A549 (cell line): ENCODE measurements at regions of chr12 and their contacts with region 1.

Region 1: DNA sequence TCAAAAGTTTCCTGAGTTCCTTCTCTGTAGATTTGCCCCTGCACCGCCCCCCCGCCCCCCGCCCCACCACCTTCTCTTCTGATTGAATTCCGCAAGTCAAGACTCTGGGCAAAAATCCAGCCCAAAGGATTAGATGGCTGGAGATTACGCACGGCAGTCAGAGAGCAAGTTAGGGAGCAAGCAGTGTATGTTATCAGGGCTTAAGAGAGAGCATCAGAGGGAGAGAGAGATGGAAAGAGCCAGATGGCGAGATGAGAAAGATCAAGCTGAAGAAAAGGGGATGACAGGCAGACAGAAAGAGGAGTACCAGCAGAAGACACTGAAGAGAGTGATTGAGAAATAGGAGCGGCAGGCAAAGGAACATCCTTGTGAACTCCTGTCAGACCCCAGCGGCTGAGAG is 13.9 kb upstream of the ANKRD33 start:
- DNase-seq: no peak
- ATAC-seq: no peak
- H3K4me3 ChIP-seq: no peak overlapping the region
- H3K27ac ChIP-seq: no peak overlapping the region
- H3K4me1 ChIP-seq: no peaks in the 10 kb centered on the region
- CTCF ChIP-seq: no peak
- EP300 ChIP-seq: no peak
- POLR2A ChIP-seq: no peak
- RAD21 ChIP-seq: no peak

Region 2: GRCh38 chr12:51832354-51833107 is 41.5 kb before region 1 on chr12:
- CTCF ChIA-PET with region 1: interaction called, 16 read pairs
- POLR2A ChIA-PET with region 1: no interaction called
- DNase-seq: no peak
- ATAC-seq: no peak; a peak in 1 of 6 replicates
- H3K4me3 ChIP-seq: no peak overlapping the region
- H3K27ac ChIP-seq: no peak overlapping the region
- H3K4me1 ChIP-seq: peaks cover 6% of the 10 kb centered on the region; the same call in 2 of the 3 replicates
- CTCF ChIP-seq: no peak
- EP300 ChIP-seq: no peak
- POLR2A ChIP-seq: no peak
- RAD21 ChIP-seq: no peak

Region 3: DNA sequence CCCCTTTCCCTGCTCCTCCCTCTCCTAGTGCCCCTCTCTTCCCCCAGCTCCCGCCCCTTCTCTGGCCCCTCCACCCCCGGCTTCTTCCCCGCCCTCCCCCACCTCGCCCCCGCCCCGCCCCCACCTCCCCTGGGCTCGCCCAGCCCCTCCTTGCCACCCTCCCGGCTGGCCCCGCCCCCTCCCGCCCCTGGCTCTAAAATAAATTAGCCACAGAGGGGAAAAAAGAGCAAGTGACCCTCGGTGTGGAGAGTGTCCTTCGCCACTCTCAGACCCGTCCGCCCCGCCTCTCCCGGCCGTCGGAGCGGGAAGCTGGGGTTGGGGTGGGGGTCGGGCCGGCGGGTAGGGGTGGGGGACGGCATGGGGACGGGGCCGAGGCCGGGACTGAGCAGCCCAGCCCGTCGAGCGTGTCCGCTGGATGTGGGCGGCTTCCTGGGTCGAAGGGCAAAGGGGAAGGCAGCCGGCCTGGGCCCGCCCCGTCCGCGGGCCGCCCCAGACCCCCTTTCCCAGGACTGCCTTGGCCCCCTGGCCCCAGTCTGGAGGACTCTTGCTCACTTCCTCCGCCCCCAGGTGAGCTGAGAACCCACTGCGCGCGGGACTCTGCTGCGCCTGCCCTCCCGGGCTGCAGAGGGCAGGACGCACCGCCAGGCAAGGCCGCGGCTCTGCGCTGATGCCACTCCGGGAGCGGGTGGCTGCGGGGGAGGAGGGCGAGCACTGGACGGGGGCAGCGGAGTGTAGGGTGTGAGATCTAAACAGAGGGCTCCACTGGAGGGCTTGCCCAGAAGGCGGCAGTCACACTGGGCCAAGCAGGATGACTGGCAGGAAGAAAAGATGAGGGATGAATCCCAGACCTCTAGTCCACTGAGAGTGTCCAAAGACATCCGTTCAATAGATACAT is 24.9 kb before region 1 on chr12:
- CTCF ChIA-PET with region 1: interaction called, 14 read pairs
- POLR2A ChIA-PET with region 1: no interaction called
- DNase-seq: no peak
- ATAC-seq: no peak
- H3K4me3 ChIP-seq: peak overlapping the region; percentile 76; the same call in 2 of the 3 replicates
- H3K27ac ChIP-seq: peak overlapping the region in 1 of 2 experiments; percentile 74; a peak in 3 of 6 replicates
- H3K4me1 ChIP-seq: peaks cover 5% of the 10 kb centered on the region; the same call in 1 of the 3 replicates
- CTCF ChIP-seq: no peak
- EP300 ChIP-seq: no peak
- POLR2A ChIP-seq: no peak
- RAD21 ChIP-seq: no peak

Region 4: DNA sequence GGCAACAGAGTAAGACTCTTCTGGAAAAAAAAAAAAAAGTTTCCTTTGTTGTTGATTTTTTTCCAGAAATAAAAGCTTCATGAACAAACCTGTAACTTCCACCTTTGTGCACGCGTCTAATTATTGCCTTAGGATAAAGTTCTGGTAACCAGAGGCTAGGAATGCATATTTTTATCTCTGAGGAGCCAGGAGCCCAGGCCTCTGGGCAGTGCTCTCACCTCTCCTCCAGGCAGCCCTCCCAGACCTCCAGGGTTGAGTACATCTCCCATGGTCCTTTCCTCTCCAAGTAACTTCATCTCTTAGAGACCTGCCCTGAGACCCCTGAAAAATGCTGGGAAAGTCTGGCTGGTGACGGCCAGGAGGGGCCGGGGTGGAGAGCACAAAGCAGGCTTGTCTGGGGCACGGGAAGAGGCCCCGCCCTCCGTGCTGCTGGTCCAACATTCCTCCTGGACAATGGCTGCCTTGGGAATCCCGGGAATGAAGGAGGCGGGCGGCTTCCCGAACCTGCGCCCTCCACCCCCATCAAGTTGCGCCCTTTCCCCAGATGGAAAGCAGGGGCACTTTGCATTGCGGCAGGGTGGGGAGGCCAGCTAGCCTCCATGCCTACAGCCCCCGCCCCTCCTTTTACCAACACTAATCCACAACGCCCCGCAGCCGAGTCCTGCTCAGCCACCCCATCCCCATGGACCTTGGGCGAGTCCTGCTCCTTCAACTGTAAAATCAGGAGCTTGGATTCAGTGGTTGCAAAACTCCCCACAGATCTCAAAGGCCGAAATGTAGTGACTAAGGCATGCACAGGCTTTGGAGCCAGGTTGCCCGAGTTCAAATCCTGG is 18.2 kb before region 1 on chr12:
- CTCF ChIA-PET with region 1: interaction called, 28 read pairs
- POLR2A ChIA-PET with region 1: no interaction called
- DNase-seq: peak in 1 of 2 experiments; percentile 28
- ATAC-seq: peak; percentile 26 to 71; a peak in 4 of 6 replicates
- H3K4me3 ChIP-seq: no peak overlapping the region
- H3K27ac ChIP-seq: no peak overlapping the region
- H3K4me1 ChIP-seq: no peaks in the 10 kb centered on the region
- CTCF ChIP-seq: no peak
- EP300 ChIP-seq: no peak
- POLR2A ChIP-seq: no peak
- RAD21 ChIP-seq: no peak

Region 5: DNA sequence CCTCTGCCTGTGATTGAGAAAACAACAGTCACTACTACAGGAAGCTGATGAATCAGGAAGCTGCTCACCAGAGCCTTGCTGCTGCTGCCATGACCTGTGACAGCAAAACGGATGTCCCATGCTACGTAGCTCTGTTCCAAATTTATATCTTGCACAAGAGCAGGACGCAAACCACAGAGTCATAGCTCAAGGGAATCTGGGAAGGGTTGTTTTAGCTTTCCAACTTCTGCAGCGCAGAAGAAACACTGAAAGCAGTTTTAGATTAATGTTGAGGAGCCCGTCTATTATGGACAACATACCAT is 12.0 kb after region 1 on chr12:
- CTCF ChIA-PET with region 1: interaction called, 32 read pairs
- POLR2A ChIA-PET with region 1: no interaction called
- DNase-seq: peak; percentile 55 to 58
- ATAC-seq: peak; percentile 45 to 55; a peak in 5 of 6 replicates
- H3K4me3 ChIP-seq: no peak overlapping the region
- H3K27ac ChIP-seq: no peak overlapping the region
- H3K4me1 ChIP-seq: no peaks in the 10 kb centered on the region
- CTCF ChIP-seq: no peak
- EP300 ChIP-seq: no peak
- POLR2A ChIP-seq: no peak
- RAD21 ChIP-seq: no peak

Region 6: GRCh38 chr12:51898937-51899336 is 24.9 kb after region 1 on chr12:
- CTCF ChIA-PET with region 1: interaction called, 24 read pairs
- POLR2A ChIA-PET with region 1: no interaction called
- DNase-seq: no peak
- ATAC-seq: no peak
- H3K4me3 ChIP-seq: no peak overlapping the region
- H3K27ac ChIP-seq: no peak overlapping the region
- H3K4me1 ChIP-seq: no peaks in the 10 kb centered on the region
- CTCF ChIP-seq: no peak
- EP300 ChIP-seq: no peak
- POLR2A ChIP-seq: no peak
- RAD21 ChIP-seq: no peak